ENCODE measurements at regions of chr17 and their contacts with region 1.

Region 1: GRCh38 chr17:7844292-7845154 is 10.3 kb upstream of the TMEM88 start:
- DNase-seq: peak; percentile 81 to 97
- H3K4me3 ChIP-seq: peak overlapping the region; percentile 80 to 88
- H3K27ac ChIP-seq: peak overlapping the region; percentile 97 to 99
- H3K4me1 ChIP-seq: peaks cover 6 to 18% of the 10 kb centered on the region in 2 donors
- H3K27me3 ChIP-seq: no peaks in the 10 kb centered on the region
- CTCF ChIP-seq: no peak

Region 2: DNA sequence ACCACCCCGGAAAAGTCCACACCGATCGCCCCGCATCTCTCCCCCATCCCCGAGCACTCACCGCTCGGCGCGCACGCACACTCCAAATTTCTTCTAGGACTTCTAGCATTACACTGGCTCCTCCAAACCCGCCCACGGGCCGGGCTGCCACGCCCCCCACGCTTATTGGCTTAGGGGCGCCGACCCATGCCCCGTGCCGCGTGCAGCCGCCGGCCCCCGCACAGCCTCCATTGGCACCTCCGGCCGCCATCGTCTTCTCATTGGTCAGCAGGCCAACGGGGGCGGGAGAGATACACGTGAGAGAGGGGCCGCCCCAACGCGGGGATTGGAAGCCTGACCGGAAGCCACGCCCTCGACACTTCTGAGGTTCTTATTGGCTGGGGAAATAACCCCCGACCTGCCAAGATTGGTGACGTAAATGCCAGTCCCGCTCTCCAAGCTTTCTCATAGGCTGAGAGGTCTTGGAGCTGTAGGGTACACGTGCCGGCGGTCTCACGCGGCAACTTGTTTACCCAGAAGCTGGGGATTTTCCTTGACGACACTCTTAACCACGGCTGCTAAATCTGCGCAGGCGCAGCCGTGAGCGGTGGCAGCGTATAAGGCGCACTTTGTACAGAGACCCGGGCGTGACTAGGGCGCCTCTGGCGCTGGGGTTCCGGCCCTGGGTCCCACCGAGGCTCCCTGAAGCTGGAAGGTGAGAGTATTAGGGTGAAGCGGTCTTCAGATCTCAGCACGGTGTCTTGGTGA is 311.9 kb after region 1 on chr17:
- intact Hi-C with region 1: loop called (anchors 5 kb)
- DNase-seq: peak; percentile 100
- H3K4me3 ChIP-seq: peak overlapping the region; percentile 77 to 90
- H3K27ac ChIP-seq: peak overlapping the region; percentile 99 to 100
- H3K4me1 ChIP-seq: peaks cover 13 to 46% of the 10 kb centered on the region in 2 donors
- H3K27me3 ChIP-seq: no peaks in the 10 kb centered on the region
- CTCF ChIP-seq: peak in 1 of 3 experiments; percentile 22